Mammary epithelial cell (primary cell): ENCODE measurements at regions of chr14 and their contacts with region 1.

Region 1: DNA sequence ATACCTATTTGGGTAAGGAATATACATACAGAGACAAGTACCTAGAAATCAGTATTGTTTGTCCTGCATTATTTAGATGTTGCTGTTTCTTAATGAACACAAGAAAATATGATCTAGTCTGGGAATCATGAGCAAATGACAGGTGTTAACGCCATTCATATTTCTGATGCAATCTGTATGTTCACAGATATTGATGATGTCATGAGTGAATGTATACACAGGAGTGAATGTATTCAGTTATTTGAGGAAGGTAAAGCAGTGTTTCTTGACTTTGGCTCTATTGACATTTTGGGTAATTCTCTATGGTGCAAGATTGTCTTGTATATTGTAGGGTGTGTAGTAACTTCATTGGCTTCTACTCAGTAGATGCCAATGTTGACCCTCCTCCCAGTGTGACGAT is 26.7 kb upstream of the RTL1 start:
- DNase-seq: no peak
- H3K4me3 ChIP-seq: no peak overlapping the region
- H3K27ac ChIP-seq: no peak overlapping the region
- H3K4me1 ChIP-seq: no peaks in the 10 kb centered on the region
- H3K27me3 ChIP-seq: no peaks in the 10 kb centered on the region
- CTCF ChIP-seq: no peak

Region 2: GRCh38 chr14:100965296-100965695 is 35.0 kb after region 1 on chr14:
- CTCF ChIA-PET with region 1: no interaction called
- dilution Hi-C with region 1: no loop called
- in situ Hi-C with region 1: no loop called
- intact Hi-C with region 1: no loop called
- DNase-seq: peak; percentile 47
- H3K4me3 ChIP-seq: no peak overlapping the region
- H3K27ac ChIP-seq: no peak overlapping the region
- H3K4me1 ChIP-seq: no peaks in the 10 kb centered on the region
- H3K27me3 ChIP-seq: no peaks in the 10 kb centered on the region
- CTCF ChIP-seq: no peak

Region 3: GRCh38 chr14:101033446-101034165 is 103.3 kb after region 1 on chr14:
- CTCF ChIA-PET with region 1: no interaction called
- dilution Hi-C with region 1: loop called (anchors 5 kb)
- in situ Hi-C with region 1: no loop called
- intact Hi-C with region 1: no loop called
- DNase-seq: no peak
- H3K4me3 ChIP-seq: no peak overlapping the region
- H3K27ac ChIP-seq: no peak overlapping the region
- H3K4me1 ChIP-seq: no peaks in the 10 kb centered on the region
- H3K27me3 ChIP-seq: no peaks in the 10 kb centered on the region
- CTCF ChIP-seq: no peak